Gastrocnemius medialis (tissue), 4 donors: ENCODE measurements at regions of chr5 and their contacts with region 1.

Region 1: GRCh38 chr5:13987843-13988464 is 43.5 kb upstream of the DNAH5 start:
- DNase-seq: peak; percentile 13 to 22
- ATAC-seq: peak; percentile 50 to 76
- H3K4me3 ChIP-seq: no peak overlapping the region
- H3K27ac ChIP-seq: no peak overlapping the region
- H3K4me1 ChIP-seq: no peaks in the 10 kb centered on the region
- H3K27me3 ChIP-seq: no peaks in the 10 kb centered on the region
- CTCF ChIP-seq: peak; percentile 72 to 83 (median 78)
- POLR2A ChIP-seq: no peak

Region 2: DNA sequence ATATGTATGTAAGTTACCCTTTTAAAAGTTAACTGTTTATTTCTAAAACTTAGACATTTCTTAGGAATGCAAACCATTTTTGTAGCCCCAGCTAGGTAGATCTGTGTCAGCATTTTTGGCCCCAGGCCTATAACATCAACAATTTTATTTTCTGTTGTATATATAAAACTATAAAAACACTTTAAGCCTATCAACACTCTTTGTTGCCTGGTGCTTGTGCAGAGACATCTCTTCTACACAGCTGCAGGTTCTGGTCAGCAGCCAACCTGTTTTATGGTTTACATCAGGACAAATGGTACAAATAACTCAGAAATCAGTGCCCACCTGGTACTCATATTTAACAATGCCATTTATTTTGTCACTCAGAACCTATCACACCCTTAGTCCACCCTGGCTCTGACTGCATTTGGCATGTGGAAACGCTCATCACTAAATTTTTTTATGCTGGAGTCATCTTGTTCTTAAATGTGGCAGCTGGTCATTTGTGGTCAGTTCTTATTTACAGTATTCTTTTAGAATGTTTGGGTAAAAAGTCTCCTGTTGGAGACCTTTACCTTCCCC is 216.9 kb before region 1 on chr5:
- in situ Hi-C with region 1: no loop called
- intact Hi-C with region 1: no loop called
- DNase-seq: no peak
- ATAC-seq: no peak
- H3K4me3 ChIP-seq: no peak overlapping the region
- H3K27ac ChIP-seq: no peak overlapping the region
- H3K4me1 ChIP-seq: no peaks in the 10 kb centered on the region
- H3K27me3 ChIP-seq: no peaks in the 10 kb centered on the region
- CTCF ChIP-seq: no peak
- POLR2A ChIP-seq: no peak

Region 3: GRCh38 chr5:14108170-14108996 is 120.4 kb after region 1 on chr5:
- in situ Hi-C with region 1: loop called in 1 of 4 experiments (anchors 10 kb)
- intact Hi-C with region 1: loop called (anchors 5 kb)
- DNase-seq: peak; percentile 39 to 52
- ATAC-seq: peak; percentile 85 to 90
- H3K4me3 ChIP-seq: peak overlapping the region in 1 of 4 donors; percentile 4
- H3K27ac ChIP-seq: peak overlapping the region in 1 of 4 donors; percentile 10
- H3K4me1 ChIP-seq: no peaks in the 10 kb centered on the region
- H3K27me3 ChIP-seq: no peaks in the 10 kb centered on the region
- CTCF ChIP-seq: peak; percentile 49 to 85 (median 66)
- POLR2A ChIP-seq: no peak

Region 4: GRCh38 chr5:14270209-14270702 is 282.3 kb after region 1 on chr5:
- in situ Hi-C with region 1: loop called (anchors 10 to 25 kb)
- intact Hi-C with region 1: loop called (anchors 2 kb)
- DNase-seq: peak; percentile 40 to 81
- ATAC-seq: peak; percentile 85 to 91
- H3K4me3 ChIP-seq: no peak overlapping the region
- H3K27ac ChIP-seq: peak overlapping the region; percentile 64 to 85 (median 78)
- H3K4me1 ChIP-seq: peaks cover 31 to 37% of the 10 kb centered on the region in 2 donors
- H3K27me3 ChIP-seq: no peaks in the 10 kb centered on the region
- CTCF ChIP-seq: peak; percentile 76 to 85 (median 81)
- POLR2A ChIP-seq: no peak

Region 5: DNA sequence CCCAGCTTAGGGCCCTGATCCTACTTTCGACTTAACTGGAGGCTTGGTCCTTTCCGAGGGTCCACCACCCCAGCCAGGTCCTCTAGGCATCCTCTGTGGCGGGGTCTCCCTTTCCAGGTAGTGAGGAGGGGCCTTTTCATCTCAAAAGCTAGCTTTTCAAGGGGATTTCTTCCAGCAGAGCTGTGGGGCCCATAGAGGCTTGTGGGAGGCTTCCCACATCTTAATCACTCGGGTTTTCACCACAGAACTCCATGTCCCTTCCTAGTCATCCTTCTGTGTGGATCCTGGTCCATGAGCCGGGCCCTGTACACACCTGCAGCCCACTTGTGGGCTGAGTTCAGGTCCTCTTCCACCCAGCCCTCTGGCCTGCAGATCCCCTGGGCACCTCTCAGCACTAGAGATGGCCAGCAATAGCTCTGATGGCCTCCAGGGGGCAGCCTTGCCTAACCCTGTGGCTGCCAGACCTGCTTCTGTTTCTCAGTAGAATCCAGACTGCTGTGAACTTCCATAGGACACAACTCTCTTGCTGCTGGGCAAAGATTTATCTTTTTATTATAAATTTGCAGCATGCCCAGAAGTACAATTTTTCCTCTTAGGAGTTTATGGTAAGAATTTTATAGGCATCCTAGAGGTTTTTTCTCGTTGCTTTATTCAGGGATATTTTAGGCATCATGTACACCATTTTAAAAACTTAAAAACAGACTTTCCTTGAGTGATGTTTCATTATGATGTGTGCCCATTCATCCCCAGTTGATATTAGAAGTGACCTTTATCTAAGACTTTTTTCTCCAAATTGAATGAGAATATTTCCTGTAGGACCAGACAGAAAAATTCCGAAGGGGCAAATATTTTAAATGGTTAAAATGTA is 364.1 kb after region 1 on chr5:
- in situ Hi-C with region 1: loop called in 3 of 4 experiments (anchors 25 kb)
- intact Hi-C with region 1: no loop called
- DNase-seq: peak; percentile 19 to 57
- ATAC-seq: peak; percentile 78 to 94
- H3K4me3 ChIP-seq: no peak overlapping the region
- H3K27ac ChIP-seq: no peak overlapping the region
- H3K4me1 ChIP-seq: no peaks in the 10 kb centered on the region
- H3K27me3 ChIP-seq: no peaks in the 10 kb centered on the region
- CTCF ChIP-seq: peak; percentile 69 to 96 (median 79)
- POLR2A ChIP-seq: no peak

Region 6: DNA sequence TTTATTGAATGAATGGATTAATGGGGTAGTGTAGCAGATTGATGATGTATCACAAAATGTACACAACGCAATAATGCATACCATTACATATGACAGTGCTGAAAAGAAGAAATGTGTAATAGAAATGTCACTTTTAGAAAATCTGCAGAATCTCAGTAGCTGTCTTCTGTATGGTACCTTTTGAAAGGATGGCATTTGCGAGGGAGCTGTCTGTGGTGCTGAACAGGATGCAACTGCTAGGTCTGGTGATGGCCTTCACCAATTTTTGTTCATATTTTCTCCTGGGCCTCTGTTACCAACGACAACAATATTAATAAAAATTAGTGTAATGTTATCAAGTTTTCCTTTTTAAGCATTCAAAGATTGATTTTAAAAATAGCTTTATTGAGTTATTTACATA is 640.4 kb after region 1 on chr5:
- in situ Hi-C with region 1: loop called (anchors 10 to 25 kb)
- intact Hi-C with region 1: no loop called
- DNase-seq: no peak
- ATAC-seq: no peak
- H3K4me3 ChIP-seq: no peak overlapping the region
- H3K27ac ChIP-seq: no peak overlapping the region
- H3K4me1 ChIP-seq: no peaks in the 10 kb centered on the region
- H3K27me3 ChIP-seq: no peaks in the 10 kb centered on the region
- CTCF ChIP-seq: no peak
- POLR2A ChIP-seq: no peak